Heart left ventricle (tissue), 16 donors: ENCODE measurements at regions of chr3 and their contacts with region 1.

Region 1: GRCh38 chr3:153443961-153444360 is 281.9 kb downstream of the RAP2B start:
- DNase-seq: no peak
- ATAC-seq: no peak
- H3K4me3 ChIP-seq: no peak overlapping the region
- H3K27ac ChIP-seq: no peak overlapping the region
- H3K4me1 ChIP-seq: peaks cover 0 to 4% (median 0%) of the 10 kb centered on the region in 12 donors
- H3K27me3 ChIP-seq: no peaks in the 10 kb centered on the region
- CTCF ChIP-seq: peak in 1 of 12 donors; percentile 6
- POLR2A ChIP-seq: no peak

Region 2: DNA sequence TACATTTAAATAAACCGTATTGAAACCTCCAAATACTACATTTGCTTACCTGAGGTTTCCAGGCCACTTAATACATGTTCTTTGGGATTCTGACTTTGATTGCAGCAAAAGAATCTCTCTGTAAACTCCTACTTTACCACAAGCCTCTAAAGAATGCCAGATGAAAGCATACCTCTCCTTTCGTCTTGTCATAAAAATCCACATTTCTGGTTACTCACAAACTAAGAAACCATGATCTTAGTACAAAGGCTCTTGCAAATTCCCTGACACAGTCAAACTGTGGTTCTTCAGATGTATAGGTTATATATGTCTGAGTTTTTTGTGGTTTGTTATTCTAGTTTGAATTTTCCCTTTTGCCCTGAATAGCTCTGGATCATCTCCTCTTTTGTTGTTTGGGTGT is 93.5 kb before region 1 on chr3:
- intact Hi-C with region 1: loop called in 1 of 10 experiments (anchors 10 kb)
- DNase-seq: no peak
- ATAC-seq: no peak
- H3K4me3 ChIP-seq: no peak overlapping the region
- H3K27ac ChIP-seq: no peak overlapping the region
- H3K4me1 ChIP-seq: no peaks in the 10 kb centered on the region
- H3K27me3 ChIP-seq: no peaks in the 10 kb centered on the region
- CTCF ChIP-seq: no peak
- POLR2A ChIP-seq: no peak

Region 3: DNA sequence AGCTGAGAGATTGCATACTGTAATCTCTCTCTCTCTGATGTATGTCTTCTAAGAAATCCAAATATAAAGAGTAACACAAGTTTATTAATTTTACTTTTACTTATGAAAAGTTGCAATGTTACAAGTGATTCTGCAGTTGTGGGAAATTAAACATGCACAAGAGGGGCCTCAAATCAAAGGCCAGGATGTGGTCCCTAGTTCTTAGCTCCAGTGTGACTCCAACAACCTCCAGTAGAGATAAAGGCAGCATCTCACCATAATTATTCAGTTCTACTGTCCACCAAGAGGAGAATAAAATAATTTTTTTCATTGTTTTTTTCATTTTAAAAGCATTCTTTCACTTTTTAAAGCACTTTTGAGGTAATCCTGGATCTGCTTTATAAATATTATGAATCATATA is 58.6 kb before region 1 on chr3:
- intact Hi-C with region 1: no loop called
- DNase-seq: no peak
- ATAC-seq: no peak
- H3K4me3 ChIP-seq: no peak overlapping the region
- H3K27ac ChIP-seq: no peak overlapping the region
- H3K4me1 ChIP-seq: no peaks in the 10 kb centered on the region
- H3K27me3 ChIP-seq: no peaks in the 10 kb centered on the region
- CTCF ChIP-seq: no peak
- POLR2A ChIP-seq: no peak